BJ (cell line): ENCODE measurements at regions of chr1 and their contacts with region 1.

Region 1: GRCh38 chr1:18926315-18927081 is 24.1 kb upstream of the ALDH4A1 start:
- DNase-seq: peak; percentile 74
- H3K4me3 ChIP-seq: no peak overlapping the region
- H3K27me3 ChIP-seq: no peaks in the 10 kb centered on the region
- CTCF ChIP-seq: 0 out of 2 replicates have a peak, but pooled peaks have one; percentile 1

Region 2: GRCh38 chr1:18861082-18861481 is 65.4 kb before region 1 on chr1:
- CTCF ChIA-PET with region 1: no interaction called
- POLR2A ChIA-PET with region 1: no interaction called
- DNase-seq: no peak
- H3K4me3 ChIP-seq: no peak overlapping the region
- H3K27me3 ChIP-seq: peaks cover 7% of the 10 kb centered on the region
- CTCF ChIP-seq: no peak

Region 3: GRCh38 chr1:18883636-18884418 is 42.7 kb before region 1 on chr1:
- CTCF ChIA-PET with region 1: no interaction called
- POLR2A ChIA-PET with region 1: no interaction called
- DNase-seq: peak; percentile 16
- H3K4me3 ChIP-seq: no peak overlapping the region
- H3K27me3 ChIP-seq: no peaks in the 10 kb centered on the region
- CTCF ChIP-seq: peak; percentile 94

Region 4: GRCh38 chr1:18956369-18957135 is 30.1 kb after region 1 on chr1 and contains the start of gene IFFO2:
- CTCF ChIA-PET with region 1: interaction called, 12 read pairs
- POLR2A ChIA-PET with region 1: interaction called, 3 read pairs
- DNase-seq: peak; percentile 50
- H3K4me3 ChIP-seq: peak within 1 kb of the TSS; percentile 88
- H3K27me3 ChIP-seq: 0 out of 2 replicates have a peak, but pooled peaks cover 2% of the 10 kb centered on the region
- CTCF ChIP-seq: no peak
- polyA plus RNA-seq, gene IFFO2: 11.1 and 15.0 TPM in 2 replicates